Posterior cingulate gyrus (tissue), 11 donors: ENCODE measurements at regions of chr4 and their contacts with region 1.

Region 1: DNA sequence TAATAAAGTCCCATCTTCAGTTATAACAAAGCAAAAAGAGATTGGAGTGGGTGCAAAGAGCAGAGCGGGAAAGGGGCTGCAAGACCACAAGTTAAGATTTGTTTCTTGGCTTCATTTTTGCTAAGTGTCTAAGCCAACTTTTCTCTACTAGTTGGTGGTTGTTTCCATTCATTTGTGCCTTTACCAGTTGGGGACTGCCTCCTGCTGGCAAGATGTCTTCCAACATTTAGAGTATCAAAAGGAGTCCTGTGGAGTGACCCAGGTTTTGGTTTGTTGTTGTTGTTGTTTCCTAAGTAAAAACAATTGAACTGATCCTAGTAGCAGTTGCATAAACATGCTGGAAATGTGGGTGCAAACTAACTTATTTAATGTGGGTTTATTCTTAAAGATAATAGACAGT is 121.1 kb downstream of the SPATA18 start:
- DNase-seq: no peak

Region 2: GRCh38 chr4:52212702-52213101 is 40.5 kb after region 1 on chr4:
- intact Hi-C with region 1: loop called (anchors 2 kb)
- DNase-seq: no peak